B cell (primary cell): ENCODE measurements at regions of chr11 and their contacts with region 1.

Region 1: GRCh38 chr11:77994412-77995362 is at the start of gene INTS4:
- DNase-seq: peak; percentile 98
- ATAC-seq: peak; percentile 95
- H3K4me3 ChIP-seq: peak within 1 kb of the TSS; percentile 61 to 85 (median 74)
- H3K4me3 Mint-ChIP-seq: peak within 1 kb of the TSS; percentile 97
- H3K27ac ChIP-seq: peak within 1 kb of the TSS; percentile 78 to 94
- H3K27ac Mint-ChIP-seq: peak within 1 kb of the TSS; percentile 90
- H3K4me1 ChIP-seq: peaks cover 29 to 34% of the 10 kb centered on the region in 2 donors
- H3K4me1 Mint-ChIP-seq: peaks cover 35% of the 10 kb centered on the region
- H3K27me3 ChIP-seq: no peaks in the 10 kb centered on the region
- H3K27me3 Mint-ChIP-seq: no peaks in the 10 kb centered on the region
- CTCF ChIP-seq: no peak
- total RNA-seq, gene INTS4: 78.9 and 92.9 TPM in 2 replicates

Region 2: GRCh38 chr11:76444384-76445123 is 1550.1 kb before region 1 on chr11 and contains the start of gene EMSY:
- CTCF ChIA-PET with region 1: no interaction called
- POLR2A ChIA-PET with region 1: no interaction called
- intact Hi-C with region 1: loop called (anchors 10 kb)
- DNase-seq: peak; percentile 96
- ATAC-seq: peak; percentile 97
- H3K4me3 ChIP-seq: peak within 1 kb of the TSS; percentile 87 to 99 (median 97)
- H3K4me3 Mint-ChIP-seq: peak within 1 kb of the TSS; percentile 96
- H3K27ac ChIP-seq: peak within 1 kb of the TSS; percentile 80 to 86
- H3K27ac Mint-ChIP-seq: peak within 1 kb of the TSS; percentile 98
- H3K4me1 ChIP-seq: peaks cover 19 to 23% of the 10 kb centered on the region in 2 donors
- H3K4me1 Mint-ChIP-seq: peaks cover 35% of the 10 kb centered on the region
- H3K27me3 ChIP-seq: no peaks in the 10 kb centered on the region
- H3K27me3 Mint-ChIP-seq: no peaks in the 10 kb centered on the region
- CTCF ChIP-seq: no peak
- total RNA-seq, gene EMSY: 54.0 and 59.7 TPM in 2 replicates

Region 3: GRCh38 chr11:77637345-77638165 is 357.1 kb before region 1 on chr11 and contains the start of gene CLNS1A:
- CTCF ChIA-PET with region 1: no interaction called
- POLR2A ChIA-PET with region 1: interaction called, 4 read pairs
- intact Hi-C with region 1: loop called (anchors 1 kb)
- DNase-seq: peak; percentile 89
- ATAC-seq: peak; percentile 99
- H3K4me3 ChIP-seq: peak within 1 kb of the TSS; percentile 58 to 85 (median 84)
- H3K4me3 Mint-ChIP-seq: peak within 1 kb of the TSS; percentile 98
- H3K27ac ChIP-seq: peak within 1 kb of the TSS; percentile 61 to 78
- H3K27ac Mint-ChIP-seq: peak within 1 kb of the TSS; percentile 96
- H3K4me1 ChIP-seq: peaks cover 17 to 23% of the 10 kb centered on the region in 2 donors
- H3K4me1 Mint-ChIP-seq: peaks cover 36% of the 10 kb centered on the region
- H3K27me3 ChIP-seq: no peaks in the 10 kb centered on the region
- H3K27me3 Mint-ChIP-seq: no peaks in the 10 kb centered on the region
- CTCF ChIP-seq: no peak
- total RNA-seq, gene CLNS1A: 115 and 121 TPM in 2 replicates

Region 4: DNA sequence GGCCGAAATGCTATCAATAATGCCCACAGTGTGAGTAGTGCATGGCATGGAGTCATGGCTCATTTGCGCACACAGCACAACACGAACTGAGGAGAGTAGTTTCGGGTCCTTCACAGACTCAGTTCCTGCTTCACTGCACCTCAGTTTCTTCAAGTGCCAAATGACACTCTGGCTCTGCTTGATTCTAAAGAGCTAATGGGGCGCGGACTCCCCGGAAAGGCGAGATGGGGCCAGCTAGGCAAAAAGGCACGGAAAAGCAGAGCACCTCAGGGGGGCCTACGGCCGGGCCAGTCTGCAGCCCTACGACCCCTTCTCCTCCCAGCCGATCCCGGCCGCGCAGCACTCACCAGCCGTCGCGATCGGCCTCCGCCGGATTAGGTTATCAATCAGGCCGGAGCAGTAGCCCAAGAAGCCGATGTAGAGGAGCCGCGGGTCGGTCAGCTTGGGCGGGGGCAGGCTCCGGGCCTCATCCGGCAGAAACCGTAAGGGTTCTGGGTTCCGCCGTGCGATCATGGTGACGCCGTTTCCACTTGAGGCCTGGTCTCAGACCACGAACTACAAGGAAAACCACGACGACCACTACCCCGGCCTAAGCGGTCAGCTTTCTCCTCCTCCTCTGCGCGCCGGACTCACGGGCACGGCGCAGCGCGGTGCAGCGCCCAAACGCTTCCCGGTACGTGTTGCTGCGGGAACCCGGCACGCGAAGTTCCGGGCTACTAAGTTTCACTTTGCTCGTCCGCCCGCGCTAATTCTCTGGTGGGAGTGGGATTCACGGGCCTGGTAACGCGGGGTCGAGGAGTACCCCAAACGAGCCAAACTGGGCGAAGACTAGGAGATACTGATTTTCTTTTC is 84.8 kb after region 1 on chr11 and contains the start of gene NDUFC2:
- CTCF ChIA-PET with region 1: interaction called, 5 read pairs
- POLR2A ChIA-PET with region 1: interaction called, 3 read pairs
- intact Hi-C with region 1: loop called (anchors 10 kb)
- DNase-seq: peak; percentile 76
- ATAC-seq: peak; percentile 86
- H3K4me3 ChIP-seq: peak within 1 kb of the TSS; percentile 89 to 96 (median 92)
- H3K4me3 Mint-ChIP-seq: peak within 1 kb of the TSS; percentile 93
- H3K27ac ChIP-seq: peak within 1 kb of the TSS; percentile 31 to 63
- H3K27ac Mint-ChIP-seq: peak within 1 kb of the TSS; percentile 86
- H3K4me1 ChIP-seq: peaks cover 18 to 35% of the 10 kb centered on the region in 2 donors
- H3K4me1 Mint-ChIP-seq: peaks cover 48% of the 10 kb centered on the region
- H3K27me3 ChIP-seq: no peaks in the 10 kb centered on the region
- H3K27me3 Mint-ChIP-seq: no peaks in the 10 kb centered on the region
- CTCF ChIP-seq: no peak
- total RNA-seq, gene NDUFC2: 39.4 and 49.0 TPM in 2 replicates

Region 5: DNA sequence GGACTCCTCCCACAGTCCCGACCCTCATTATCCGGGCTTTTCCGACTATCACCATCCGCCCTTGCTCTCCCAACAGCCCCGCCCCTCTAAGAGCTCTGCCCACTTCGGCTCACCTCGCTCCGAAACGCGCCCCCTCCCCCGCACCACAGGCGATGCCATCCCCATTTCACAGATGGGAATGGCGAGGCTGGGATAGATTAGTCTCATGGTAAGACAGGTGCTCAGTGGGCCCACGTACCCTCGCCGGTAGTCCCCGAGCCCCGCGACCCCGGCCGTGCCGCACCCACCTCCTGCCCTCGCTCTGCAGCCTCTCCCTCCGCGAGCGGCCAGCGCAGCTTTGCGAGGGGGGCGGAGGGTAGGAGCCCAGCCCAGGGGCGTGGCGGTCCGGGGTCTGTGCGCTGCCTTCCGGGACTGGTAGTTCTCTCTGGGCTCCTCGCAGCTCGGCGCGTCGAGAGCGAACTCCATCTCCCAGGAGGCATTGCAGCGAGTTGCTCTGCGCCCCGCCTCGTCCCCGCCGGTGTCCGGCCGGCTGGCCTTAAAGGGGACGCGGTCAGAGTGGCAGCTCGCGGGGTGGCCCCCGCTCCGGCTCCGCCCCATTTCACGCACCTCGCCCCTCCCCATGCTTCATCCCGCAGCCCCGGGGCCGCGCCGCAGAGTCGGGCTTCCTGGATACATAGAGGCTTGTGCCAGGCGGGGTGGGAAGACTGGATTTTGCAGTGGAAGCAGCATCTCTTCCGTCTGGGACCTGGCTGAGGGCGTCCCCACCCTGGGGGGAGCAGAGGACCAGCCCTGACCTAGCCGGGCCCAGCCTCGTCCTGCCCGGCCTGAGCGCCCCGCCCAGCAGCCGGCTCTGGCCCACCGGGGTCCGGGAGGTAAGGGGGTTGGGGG is 193.8 kb after region 1 on chr11 and contains the starts of genes KCTD21 and USP35:
- CTCF ChIA-PET with region 1: no interaction called
- POLR2A ChIA-PET with region 1: no interaction called
- intact Hi-C with region 1: loop called (anchors 1 kb)
- DNase-seq: peak; percentile 93
- ATAC-seq: peak; percentile 93
- H3K4me3 ChIP-seq: peak within 1 kb of the TSS; percentile 67 to 96 (median 90)
- H3K4me3 Mint-ChIP-seq: peak within 1 kb of the TSS; percentile 100
- H3K27ac ChIP-seq: peak within 1 kb of the TSS; percentile 55 to 77
- H3K27ac Mint-ChIP-seq: peak within 1 kb of the TSS; percentile 93
- H3K4me1 ChIP-seq: peaks cover 24 to 28% of the 10 kb centered on the region in 2 donors
- H3K4me1 Mint-ChIP-seq: peaks cover 45% of the 10 kb centered on the region
- H3K27me3 ChIP-seq: no peaks in the 10 kb centered on the region
- H3K27me3 Mint-ChIP-seq: no peaks in the 10 kb centered on the region
- CTCF ChIP-seq: no peak
- total RNA-seq, gene KCTD21: 6.3 and 8.0 TPM in 2 replicates
- total RNA-seq, gene USP35: 4.5 and 6.0 TPM in 2 replicates

Region 6: DNA sequence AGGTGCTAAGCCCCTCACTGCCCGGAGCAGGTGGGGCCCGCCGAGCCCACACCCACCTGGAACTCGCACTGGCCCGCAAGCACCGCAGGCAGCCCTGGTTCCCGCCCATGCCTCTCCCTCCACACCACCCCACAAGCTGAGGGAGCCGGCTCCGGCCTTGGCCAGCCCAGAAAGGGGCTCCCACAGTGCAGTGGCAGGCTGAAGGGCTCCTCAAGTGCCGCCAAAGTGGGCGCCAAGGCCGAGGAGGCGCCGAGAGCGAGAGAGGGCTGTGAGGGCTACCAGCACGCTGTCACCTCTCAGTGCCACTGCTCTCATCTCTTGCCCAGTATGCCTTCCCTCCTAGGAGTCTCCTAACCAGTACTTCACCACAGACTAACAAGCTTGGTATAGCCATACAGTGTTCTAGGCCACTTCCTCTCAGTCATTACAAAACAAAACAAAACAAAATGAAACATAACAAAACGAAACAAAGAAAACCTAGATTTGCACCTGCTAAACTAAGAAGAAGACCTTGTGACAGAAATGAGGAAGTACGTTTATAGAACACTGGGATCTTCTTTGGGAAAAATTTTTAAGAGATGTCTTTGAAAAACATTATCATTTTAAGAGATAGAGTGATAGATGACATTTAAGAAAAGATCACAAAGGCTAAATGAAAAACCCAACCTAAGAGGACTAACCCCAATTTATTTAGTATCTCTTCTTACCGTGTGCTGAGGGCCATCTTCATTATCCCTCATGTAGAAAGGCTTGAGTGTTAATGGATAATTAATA is 470.7 kb after region 1 on chr11:
- CTCF ChIA-PET with region 1: no interaction called
- POLR2A ChIA-PET with region 1: no interaction called
- intact Hi-C with region 1: loop called (anchors 1 kb)
- DNase-seq: peak; percentile 81
- ATAC-seq: peak; percentile 89
- H3K4me3 ChIP-seq: peak overlapping the region in 3 of 5 experiments; percentile 16 to 34 (median 20)
- H3K4me3 Mint-ChIP-seq: peak overlapping the region; percentile 72
- H3K27ac ChIP-seq: peak overlapping the region; percentile 90 to 92
- H3K27ac Mint-ChIP-seq: peak overlapping the region; percentile 95
- H3K4me1 ChIP-seq: peaks cover 26 to 27% of the 10 kb centered on the region in 2 donors
- H3K4me1 Mint-ChIP-seq: peaks cover 44% of the 10 kb centered on the region
- H3K27me3 ChIP-seq: no peaks in the 10 kb centered on the region
- H3K27me3 Mint-ChIP-seq: no peaks in the 10 kb centered on the region
- CTCF ChIP-seq: no peak

Region 7: DNA sequence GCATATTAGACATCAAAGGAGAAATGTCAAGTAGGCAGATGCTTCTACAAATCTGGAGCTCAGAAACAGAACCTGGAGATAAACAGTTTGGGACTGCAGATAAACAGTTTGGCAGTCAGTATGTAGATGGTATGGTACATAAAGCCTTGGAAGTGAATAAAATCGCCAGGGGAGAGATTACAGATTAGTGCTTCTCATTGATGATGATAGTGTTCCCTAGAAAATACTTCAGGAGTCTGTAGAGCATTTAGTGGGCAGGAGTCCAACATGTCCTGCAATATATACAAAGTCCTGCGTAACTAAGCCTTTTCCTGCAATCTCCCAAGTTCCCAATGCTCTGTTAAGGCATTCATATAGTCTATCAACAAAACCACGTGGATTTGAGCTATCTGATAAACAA is 544.8 kb after region 1 on chr11:
- CTCF ChIA-PET with region 1: no interaction called
- POLR2A ChIA-PET with region 1: no interaction called
- intact Hi-C with region 1: no loop called
- DNase-seq: no peak
- ATAC-seq: no peak
- H3K4me3 ChIP-seq: no peak overlapping the region
- H3K4me3 Mint-ChIP-seq: no peak overlapping the region
- H3K27ac ChIP-seq: no peak overlapping the region
- H3K27ac Mint-ChIP-seq: no peak overlapping the region
- H3K4me1 ChIP-seq: peaks cover 13 to 20% of the 10 kb centered on the region in 2 donors
- H3K4me1 Mint-ChIP-seq: peaks cover 33% of the 10 kb centered on the region
- H3K27me3 ChIP-seq: no peaks in the 10 kb centered on the region
- H3K27me3 Mint-ChIP-seq: no peaks in the 10 kb centered on the region
- CTCF ChIP-seq: no peak

Region 8: GRCh38 chr11:78574386-78575381 is 580.0 kb after region 1 on chr11 and contains the start of gene NARS2:
- CTCF ChIA-PET with region 1: interaction called, 4 read pairs
- POLR2A ChIA-PET with region 1: interaction called, 4 read pairs
- intact Hi-C with region 1: loop called (anchors 1 kb)
- DNase-seq: peak; percentile 97
- ATAC-seq: peak; percentile 98
- H3K4me3 ChIP-seq: peak within 1 kb of the TSS; percentile 67 to 96 (median 79)
- H3K4me3 Mint-ChIP-seq: peak within 1 kb of the TSS; percentile 100
- H3K27ac ChIP-seq: peak within 1 kb of the TSS; percentile 80 to 92
- H3K27ac Mint-ChIP-seq: peak within 1 kb of the TSS; percentile 98
- H3K4me1 ChIP-seq: peaks cover 27 to 30% of the 10 kb centered on the region in 2 donors
- H3K4me1 Mint-ChIP-seq: peaks cover 47% of the 10 kb centered on the region
- H3K27me3 ChIP-seq: no peaks in the 10 kb centered on the region
- H3K27me3 Mint-ChIP-seq: no peaks in the 10 kb centered on the region
- CTCF ChIP-seq: no peak
- total RNA-seq, gene NARS2: 14.6 and 16.0 TPM in 2 replicates